Activated naive CD4-positive, alpha-beta T cell treated with anti-CD3 and anti-CD28 coated beads, Interleukin-2, amount 10 ng/mL, durations not matched to agents 7 days and 5 days (primary cell): ENCODE measurements at regions of chr12 and their contacts with region 1.

Region 1: DNA sequence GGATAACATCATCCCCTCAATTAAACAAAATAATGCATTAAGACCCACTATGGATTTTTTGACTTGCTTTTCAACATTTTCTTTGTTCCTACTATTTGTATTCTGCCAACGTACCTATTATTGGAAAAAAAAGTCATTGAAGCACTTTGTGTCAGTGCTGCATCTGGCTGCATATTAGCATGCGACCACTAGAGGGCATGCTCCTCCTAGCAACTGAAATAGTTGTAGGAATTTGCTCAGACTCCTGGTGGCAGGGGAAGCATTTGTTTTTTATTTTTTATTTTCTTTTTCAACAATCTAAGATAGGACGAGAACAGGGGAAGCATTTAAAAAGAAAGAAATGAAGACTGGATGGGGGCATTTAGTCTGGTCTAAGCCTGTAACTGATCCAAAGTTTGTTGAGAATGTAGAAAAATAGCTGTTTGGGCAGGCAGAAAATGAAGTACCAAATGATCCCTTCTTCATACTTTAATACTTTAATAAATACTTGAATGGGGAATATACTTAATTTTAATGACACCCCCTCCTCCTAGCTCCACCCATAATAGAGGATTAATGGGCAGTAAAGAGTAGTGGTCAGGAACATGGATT is 14.5 kb upstream of the CLEC4A start:
- DNase-seq: peak; percentile 90
- H3K4me3 Mint-ChIP-seq: no peak overlapping the region
- H3K27ac Mint-ChIP-seq: no peak overlapping the region
- H3K4me1 Mint-ChIP-seq: peaks cover 9% of the 10 kb centered on the region
- H3K27me3 Mint-ChIP-seq: no peaks in the 10 kb centered on the region

Region 2: DNA sequence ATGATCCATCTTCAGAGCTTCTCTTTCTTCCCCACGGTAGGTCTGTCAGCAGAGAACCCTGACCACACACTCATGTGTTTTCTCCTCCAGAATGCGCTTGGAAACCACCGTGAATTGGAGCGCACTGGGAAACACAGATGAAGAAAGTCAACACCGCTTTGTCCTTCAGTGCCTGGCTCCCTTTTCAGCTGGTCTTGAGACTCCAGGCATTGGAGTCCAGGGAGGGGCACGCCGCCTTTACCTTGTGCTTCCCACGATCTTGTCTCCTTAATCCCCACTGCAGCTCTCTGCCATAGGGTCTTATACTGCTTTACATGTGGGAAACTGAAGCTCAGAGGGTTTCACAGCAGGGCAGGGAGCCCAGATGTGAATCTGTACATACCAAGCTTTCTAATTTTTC is 117.5 kb after region 1 on chr12:
- CTCF ChIA-PET with region 1: interaction called, 36 read pairs
- DNase-seq: no peak
- H3K4me3 Mint-ChIP-seq: no peak overlapping the region
- H3K27ac Mint-ChIP-seq: no peak overlapping the region
- H3K4me1 Mint-ChIP-seq: peaks cover 16% of the 10 kb centered on the region
- H3K27me3 Mint-ChIP-seq: peaks cover 8% of the 10 kb centered on the region